ENCODE measurements at regions of chr17 and their contacts with region 1.

Region 1: DNA sequence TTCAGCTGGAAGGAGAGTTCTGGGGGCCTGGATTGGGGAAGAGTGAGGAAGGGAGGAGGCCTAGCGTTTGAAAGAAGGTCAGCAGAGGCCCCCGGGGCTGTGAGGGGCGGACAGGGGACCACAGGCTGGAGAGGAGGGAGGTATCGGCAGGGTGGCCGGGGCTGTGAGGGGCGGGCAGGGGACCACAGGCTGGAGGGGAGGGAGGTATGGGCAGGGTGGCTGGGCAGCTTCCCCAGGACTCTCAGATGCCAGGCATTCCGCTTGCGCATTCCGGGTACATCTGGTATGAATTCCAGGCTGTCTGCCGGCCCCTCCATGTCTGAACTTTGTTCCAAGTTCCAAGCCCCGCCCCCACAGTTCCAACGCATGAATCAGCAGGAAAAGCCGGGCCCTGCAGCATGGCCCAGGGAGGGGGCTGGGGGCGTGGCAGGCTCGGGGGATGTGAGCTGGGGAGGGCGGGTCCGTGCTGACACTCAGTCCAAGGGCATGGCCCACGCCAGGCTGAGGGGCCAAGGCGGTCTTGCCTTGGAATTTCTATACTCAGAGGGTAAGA is 4.3 kb upstream of the TLCD2 start:
- DNase-seq: peak; percentile 97 to 99 (median 99)
- H3K4me3 ChIP-seq: peak overlapping the region in 3 of 4 donors; percentile 5 to 100 (median 100)
- H3K27ac ChIP-seq: peak overlapping the region; percentile 95 to 100 (median 100)
- H3K4me1 ChIP-seq: peaks cover 26 to 47% of the 10 kb centered on the region in 2 donors
- H3K27me3 ChIP-seq: no peaks in the 10 kb centered on the region
- CTCF ChIP-seq: no peak
- POLR2A ChIP-seq: peak; percentile 28 to 64

Region 2: GRCh38 chr17:1275962-1276736 is 438.4 kb before region 1 on chr17:
- intact Hi-C with region 1: no loop called
- DNase-seq: peak; percentile 41 to 76 (median 61)
- H3K4me3 ChIP-seq: no peak overlapping the region
- H3K27ac ChIP-seq: no peak overlapping the region
- H3K4me1 ChIP-seq: no peaks in the 10 kb centered on the region
- H3K27me3 ChIP-seq: peaks cover 26% of the 10 kb centered on the region
- CTCF ChIP-seq: peak; percentile 52 to 81 (median 75)
- POLR2A ChIP-seq: no peak

Region 3: GRCh38 chr17:1628856-1629646 is 85.5 kb before region 1 on chr17:
- intact Hi-C with region 1: no loop called
- DNase-seq: peak; percentile 93 to 98 (median 95)
- H3K4me3 ChIP-seq: peak overlapping the region in 3 of 4 donors; percentile 33 to 82 (median 64)
- H3K27ac ChIP-seq: peak overlapping the region; percentile 53 to 96 (median 71)
- H3K4me1 ChIP-seq: peaks cover 10 to 38% of the 10 kb centered on the region in 2 donors
- H3K27me3 ChIP-seq: no peaks in the 10 kb centered on the region
- CTCF ChIP-seq: peak in 3 of 6 experiments; percentile 34 to 53 (median 38)
- POLR2A ChIP-seq: peak; percentile 8 to 51

Region 4: GRCh38 chr17:1648963-1649843 is 65.3 kb before region 1 on chr17:
- intact Hi-C with region 1: loop called in 1 of 2 experiments (anchors 10 kb)
- DNase-seq: peak; percentile 90 to 98 (median 96)
- H3K4me3 ChIP-seq: peak overlapping the region in 3 of 4 donors; percentile 60 to 71 (median 70)
- H3K27ac ChIP-seq: peak overlapping the region; percentile 87 to 98 (median 96)
- H3K4me1 ChIP-seq: peaks cover 21 to 40% of the 10 kb centered on the region in 2 donors
- H3K27me3 ChIP-seq: no peaks in the 10 kb centered on the region
- CTCF ChIP-seq: peak in 2 of 6 experiments; percentile 15 to 88
- POLR2A ChIP-seq: peak; percentile 24 to 86

Region 5: DNA sequence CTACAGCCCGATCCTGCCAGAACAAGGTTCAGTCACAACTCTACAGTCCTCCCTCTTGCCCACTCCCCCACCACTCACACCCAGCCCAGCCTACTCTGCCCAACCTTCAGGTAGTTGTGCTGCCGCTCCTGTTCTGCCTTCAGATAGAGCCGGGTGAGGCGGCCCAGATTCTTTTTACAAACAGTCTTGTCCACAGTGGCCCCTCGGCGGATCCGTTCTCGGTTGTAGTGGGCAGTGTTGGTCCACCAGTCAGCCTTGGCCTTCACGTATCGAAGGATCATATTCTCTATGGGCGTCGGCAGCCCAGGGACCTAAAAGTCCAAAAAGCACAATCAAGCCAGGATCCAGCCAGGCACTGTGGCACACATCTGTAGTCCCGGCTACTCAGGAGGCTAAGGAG is 38.1 kb before region 1 on chr17:
- intact Hi-C with region 1: loop called in 1 of 2 experiments (anchors 5 kb)
- DNase-seq: no peak
- H3K4me3 ChIP-seq: no peak overlapping the region
- H3K27ac ChIP-seq: peak overlapping the region in 2 of 5 donors; percentile 22 to 28
- H3K4me1 ChIP-seq: no peaks in the 10 kb centered on the region
- H3K27me3 ChIP-seq: no peaks in the 10 kb centered on the region
- CTCF ChIP-seq: no peak
- POLR2A ChIP-seq: no peak

Region 6: DNA sequence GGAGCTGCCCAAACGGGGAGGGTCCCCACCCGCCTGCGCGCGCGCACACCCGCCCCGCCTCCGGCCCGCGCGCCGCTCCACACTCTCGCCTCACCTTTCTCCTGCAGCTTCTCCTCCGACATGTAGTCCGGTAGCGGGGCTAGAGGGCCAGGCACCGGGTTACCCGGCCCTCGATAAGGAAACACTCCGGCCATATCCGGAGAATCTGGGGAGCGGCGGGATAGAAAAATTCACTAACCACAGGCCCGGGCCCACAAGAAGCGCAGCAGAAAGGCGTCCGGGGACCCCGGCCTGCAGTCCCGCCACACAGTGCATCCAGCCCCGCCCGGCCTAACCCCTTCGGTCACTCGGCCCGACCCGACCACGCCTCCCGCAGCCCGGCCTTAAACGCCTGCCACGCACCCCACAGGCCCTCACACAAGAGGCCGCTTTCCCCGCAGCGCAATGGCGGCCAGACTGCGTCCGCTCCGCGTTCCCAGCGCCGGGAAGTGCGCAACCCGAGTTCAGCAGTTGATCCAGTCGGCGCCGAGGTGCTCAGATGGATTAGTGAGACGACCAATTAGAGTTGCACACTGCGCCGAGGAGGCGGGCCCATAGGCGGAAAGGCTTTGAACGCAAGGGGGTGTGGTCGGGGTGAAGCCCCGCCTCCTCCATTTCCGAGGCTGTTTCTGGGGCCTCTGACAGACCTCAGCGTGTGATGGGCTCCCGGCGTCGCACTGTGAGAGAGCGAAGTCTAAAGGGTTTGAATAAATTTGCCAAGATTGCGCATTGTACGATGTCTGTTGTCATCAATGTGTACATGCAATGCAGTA is 29.9 kb before region 1 on chr17 and contains the start of gene PRPF8:
- intact Hi-C with region 1: loop called (anchors 2 to 5 kb)
- DNase-seq: peak; percentile 98 to 100 (median 99)
- H3K4me3 ChIP-seq: peak within 1 kb of the TSS; percentile 60 to 93 (median 84)
- H3K27ac ChIP-seq: peak within 1 kb of the TSS; percentile 88 to 98 (median 97)
- H3K4me1 ChIP-seq: peaks cover 13 to 26% of the 10 kb centered on the region in 2 donors
- H3K27me3 ChIP-seq: no peaks in the 10 kb centered on the region
- CTCF ChIP-seq: peak in 1 of 6 experiments; percentile 4
- POLR2A ChIP-seq: peak; percentile 97
- total RNA-seq, gene PRPF8: 136 to 748 (median 227) TPM

Region 7: DNA sequence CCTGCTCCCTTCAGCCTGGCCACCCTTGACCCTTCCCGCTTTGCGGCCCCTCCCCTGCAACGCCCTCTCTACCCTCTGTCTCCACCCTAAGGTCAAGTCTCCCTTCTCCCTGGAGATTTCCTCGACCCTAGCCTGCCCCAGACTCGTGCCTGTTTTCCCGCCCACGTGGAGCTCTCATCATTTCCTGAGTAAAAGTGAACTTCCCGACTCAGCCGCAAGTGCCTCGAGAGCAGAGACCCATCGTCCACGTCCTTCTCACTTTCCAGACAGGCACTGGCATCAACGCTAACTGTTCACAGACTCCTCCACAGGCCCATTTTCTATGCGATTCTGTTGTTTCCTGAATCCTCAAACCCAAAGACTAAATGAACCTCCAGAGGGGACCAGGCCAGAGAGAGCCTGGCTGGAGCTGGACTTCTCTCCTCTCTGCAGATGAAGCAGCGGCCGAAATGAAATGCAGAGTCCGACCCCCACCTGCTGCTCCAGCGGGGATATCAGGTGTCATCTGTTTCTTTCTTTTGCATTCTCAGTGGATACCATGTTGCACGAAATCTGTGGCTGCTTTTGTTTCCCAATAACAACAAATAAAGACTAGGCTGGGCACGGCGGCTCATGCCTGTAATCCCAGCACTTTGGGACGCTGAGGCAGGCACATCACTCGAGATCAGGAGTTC is 258.1 kb after region 1 on chr17:
- intact Hi-C with region 1: no loop called
- DNase-seq: peak in 5 of 7 donors; percentile 31 to 68 (median 49)
- H3K4me3 ChIP-seq: no peak overlapping the region
- H3K27ac ChIP-seq: no peak overlapping the region
- H3K4me1 ChIP-seq: peaks cover 6 to 11% of the 10 kb centered on the region in 2 donors
- H3K27me3 ChIP-seq: no peaks in the 10 kb centered on the region
- CTCF ChIP-seq: peak in 2 of 6 experiments; percentile 27 to 32
- POLR2A ChIP-seq: no peak